Caco-2 (cell line): ENCODE measurements at regions of chr11 and their contacts with region 1.

Region 1: DNA sequence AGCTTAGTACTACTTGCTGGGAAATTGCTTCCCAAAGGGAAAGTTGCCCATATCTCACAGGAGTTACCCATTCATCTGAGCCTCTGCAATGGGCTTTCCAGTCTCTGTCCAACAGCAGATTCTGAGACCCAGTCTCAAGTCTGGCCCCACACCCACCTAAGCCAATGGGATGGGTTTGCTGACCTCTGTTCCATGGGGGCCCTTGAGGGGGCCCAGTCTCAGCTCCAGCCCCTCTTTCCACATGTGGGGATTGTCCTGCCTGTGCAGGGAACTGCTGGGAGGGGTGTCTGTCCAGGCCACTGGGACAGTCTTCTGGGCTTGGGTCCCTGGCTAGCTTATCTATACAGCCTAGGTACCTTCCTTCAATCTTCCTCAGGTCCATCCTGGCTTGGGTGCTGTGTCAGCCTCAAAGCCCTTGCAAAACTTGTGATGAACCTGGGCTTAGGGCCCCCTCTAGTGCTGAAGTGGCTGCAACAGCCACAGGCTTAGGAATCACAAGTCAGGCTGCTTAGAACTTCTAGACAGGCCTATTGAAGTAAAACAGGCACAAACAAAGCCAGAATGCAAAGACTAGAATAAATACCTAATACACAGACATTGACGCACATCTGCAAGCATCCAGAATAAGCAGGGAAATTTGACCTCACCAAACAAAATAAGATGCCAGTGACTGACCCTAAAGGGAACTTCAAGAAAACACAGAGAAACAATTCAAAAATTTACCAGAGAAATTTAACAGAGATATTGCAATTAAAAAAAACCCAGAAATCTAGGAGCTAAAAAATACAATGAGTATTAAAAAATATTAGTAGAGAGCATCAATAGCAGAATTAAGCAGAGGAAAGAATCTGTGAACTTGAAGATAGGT is 11.7 kb upstream of the PATL1 start:
- DNase-seq: peak; percentile 88 to 90
- H3K4me3 ChIP-seq: no peak overlapping the region
- H3K4me3 Mint-ChIP-seq: peak overlapping the region; percentile 51
- H3K27ac Mint-ChIP-seq: peak overlapping the region; percentile 7
- H3K4me1 ChIP-seq: peaks cover 34% of the 10 kb centered on the region
- H3K4me1 Mint-ChIP-seq: peaks cover 29% of the 10 kb centered on the region
- H3K27me3 ChIP-seq: no peaks in the 10 kb centered on the region
- H3K27me3 Mint-ChIP-seq: no peaks in the 10 kb centered on the region
- CTCF ChIP-seq: peak; percentile 86 to 88

Region 2: DNA sequence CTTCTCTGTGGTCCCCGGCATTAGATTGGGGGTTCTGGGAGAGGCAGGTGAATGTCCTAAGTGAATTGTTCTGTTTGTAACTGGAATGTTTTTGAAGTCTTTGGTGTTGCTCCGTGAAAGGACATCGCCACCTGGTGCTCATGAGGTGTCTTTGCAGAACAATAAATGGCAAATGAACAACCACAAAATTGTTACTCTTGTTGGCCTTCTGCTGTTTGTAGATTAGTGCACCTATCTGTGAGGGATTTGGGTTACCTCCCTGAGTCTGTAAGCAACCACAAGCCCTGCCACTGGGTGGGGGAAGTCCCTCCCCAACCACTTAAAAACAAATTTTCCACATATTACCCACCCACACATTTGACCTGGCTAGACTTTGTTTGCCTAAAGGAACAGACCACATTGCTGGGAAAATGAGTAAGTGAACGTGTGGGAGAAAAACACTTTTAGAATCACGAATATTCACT is 472.5 kb before region 1 on chr11:
- CTCF ChIA-PET with region 1: no interaction called
- POLR2A ChIA-PET with region 1: no interaction called
- intact Hi-C with region 1: loop called (anchors 5 kb)
- DNase-seq: peak in 1 of 2 experiments; percentile 40
- H3K4me3 ChIP-seq: no peak overlapping the region
- H3K4me3 Mint-ChIP-seq: no peak overlapping the region
- H3K27ac Mint-ChIP-seq: no peak overlapping the region
- H3K4me1 ChIP-seq: no peaks in the 10 kb centered on the region
- H3K4me1 Mint-ChIP-seq: peaks cover 6% of the 10 kb centered on the region
- H3K27me3 ChIP-seq: no peaks in the 10 kb centered on the region
- H3K27me3 Mint-ChIP-seq: no peaks in the 10 kb centered on the region
- CTCF ChIP-seq: peak; percentile 59 to 80

Region 3: GRCh38 chr11:59542142-59542810 is 138.2 kb before region 1 on chr11:
- CTCF ChIA-PET with region 1: interaction called, 3 read pairs
- POLR2A ChIA-PET with region 1: no interaction called
- intact Hi-C with region 1: loop called (anchors 1 kb)
- DNase-seq: no peak
- H3K4me3 ChIP-seq: no peak overlapping the region
- H3K4me3 Mint-ChIP-seq: no peak overlapping the region
- H3K27ac Mint-ChIP-seq: no peak overlapping the region
- H3K4me1 ChIP-seq: peaks cover 9% of the 10 kb centered on the region
- H3K4me1 Mint-ChIP-seq: peaks cover 6% of the 10 kb centered on the region
- H3K27me3 ChIP-seq: no peaks in the 10 kb centered on the region
- H3K27me3 Mint-ChIP-seq: no peaks in the 10 kb centered on the region
- CTCF ChIP-seq: no peak

Region 4: GRCh38 chr11:59615637-59616395 is 64.7 kb before region 1 on chr11 and contains the start of gene OSBP:
- CTCF ChIA-PET with region 1: no interaction called
- POLR2A ChIA-PET with region 1: no interaction called
- intact Hi-C with region 1: loop called (anchors 1 kb)
- DNase-seq: peak; percentile 99 to 100
- H3K4me3 ChIP-seq: peak within 1 kb of the TSS; percentile 92
- H3K4me3 Mint-ChIP-seq: peak within 1 kb of the TSS; percentile 98
- H3K27ac Mint-ChIP-seq: peak within 1 kb of the TSS; percentile 98
- H3K4me1 ChIP-seq: peaks cover 29% of the 10 kb centered on the region
- H3K4me1 Mint-ChIP-seq: peaks cover 29% of the 10 kb centered on the region
- H3K27me3 ChIP-seq: no peaks in the 10 kb centered on the region
- H3K27me3 Mint-ChIP-seq: no peaks in the 10 kb centered on the region
- CTCF ChIP-seq: no peak
- total RNA-seq, gene OSBP: 64.5 and 67.5 TPM in 2 replicates

Region 5: DNA sequence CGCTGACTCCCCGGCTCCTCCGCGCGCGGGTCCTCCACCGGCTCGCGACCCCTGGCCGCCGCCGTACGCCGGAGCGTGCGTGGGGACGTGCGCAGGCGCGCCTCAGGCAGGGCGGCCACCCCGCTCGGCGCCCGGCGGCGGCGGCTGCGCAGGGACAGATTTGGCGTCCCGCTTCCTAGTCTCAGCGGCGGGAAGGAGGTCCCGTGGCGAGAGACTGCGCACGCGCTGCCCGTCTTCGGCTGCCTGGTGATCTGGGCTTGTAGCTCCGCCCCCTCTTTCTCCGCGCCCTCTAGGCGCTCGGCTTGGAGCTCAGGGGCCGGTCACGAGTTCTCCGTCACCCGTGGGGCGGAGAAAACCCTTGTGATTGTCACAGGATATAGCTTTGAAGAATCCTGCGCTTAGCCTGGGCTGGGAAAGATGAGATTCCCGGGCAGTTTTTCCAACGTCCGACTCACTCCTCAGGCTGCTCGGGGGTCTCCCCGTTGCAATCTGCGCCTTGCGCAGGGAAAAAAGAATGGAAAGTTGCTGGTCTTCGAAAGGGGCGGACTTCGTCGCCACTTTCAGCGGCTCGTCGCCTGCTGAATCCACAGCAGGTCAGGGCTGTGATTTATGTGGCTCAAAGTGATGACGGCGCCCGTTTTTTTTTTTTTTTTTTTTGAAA is 11.4 kb before region 1 on chr11 and contains the start of gene PATL1:
- CTCF ChIA-PET with region 1: interaction called, 28 read pairs
- POLR2A ChIA-PET with region 1: interaction called, 12 read pairs
- intact Hi-C with region 1: loop called (anchors 1 kb)
- DNase-seq: peak; percentile 99
- H3K4me3 ChIP-seq: peak within 1 kb of the TSS; percentile 96
- H3K4me3 Mint-ChIP-seq: peak within 1 kb of the TSS; percentile 96
- H3K27ac Mint-ChIP-seq: peak within 1 kb of the TSS; percentile 100
- H3K4me1 ChIP-seq: peaks cover 5% of the 10 kb centered on the region
- H3K4me1 Mint-ChIP-seq: peaks cover 14% of the 10 kb centered on the region
- H3K27me3 ChIP-seq: no peaks in the 10 kb centered on the region
- H3K27me3 Mint-ChIP-seq: no peaks in the 10 kb centered on the region
- CTCF ChIP-seq: no peak
- total RNA-seq, gene PATL1: 57.8 and 61.4 TPM in 2 replicates

Region 6: DNA sequence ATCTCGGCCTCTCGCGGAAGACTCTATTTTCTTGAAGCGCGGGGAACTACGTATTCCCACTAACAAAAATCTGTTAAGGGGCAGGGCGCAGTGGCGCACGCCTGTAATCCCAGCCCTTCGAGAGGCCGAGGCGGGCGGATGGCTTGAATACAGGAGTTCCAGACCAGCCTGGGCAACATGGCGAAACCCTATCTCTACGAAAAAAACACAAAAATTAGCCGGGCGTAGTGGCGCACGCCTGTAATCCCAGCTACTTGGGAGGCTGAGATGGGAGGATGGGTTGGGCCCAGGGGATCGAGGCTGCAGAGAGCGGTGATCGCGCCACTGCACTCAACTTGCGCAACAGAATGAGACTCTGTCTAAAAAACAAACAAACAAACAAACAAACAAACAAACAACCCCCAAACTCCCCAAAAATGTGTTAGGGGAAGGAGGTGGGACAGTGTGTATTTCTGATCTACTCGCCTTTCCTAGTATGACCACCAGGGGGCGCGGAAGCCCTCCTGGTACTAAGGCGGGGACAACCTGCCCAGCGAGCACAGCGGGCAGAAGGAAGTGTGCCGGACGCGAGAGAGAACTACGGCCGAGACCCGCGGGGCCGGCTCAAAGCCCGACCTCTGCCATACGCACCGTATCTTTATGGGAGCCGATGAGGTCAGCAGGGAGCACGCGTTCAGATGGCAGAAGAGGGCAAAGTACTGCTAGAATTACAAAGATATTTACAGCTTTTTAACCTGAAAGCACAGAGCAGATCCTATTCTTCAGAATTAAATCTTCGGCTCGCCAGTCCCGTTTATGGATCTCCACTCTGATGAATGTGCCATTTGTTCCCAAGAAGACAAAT is 73.4 kb after region 1 on chr11:
- CTCF ChIA-PET with region 1: no interaction called
- POLR2A ChIA-PET with region 1: no interaction called
- intact Hi-C with region 1: loop called (anchors 1 kb)
- DNase-seq: peak; percentile 86 to 90
- H3K4me3 ChIP-seq: peak overlapping the region; percentile 96
- H3K4me3 Mint-ChIP-seq: peak overlapping the region; percentile 83
- H3K27ac Mint-ChIP-seq: peak overlapping the region; percentile 53
- H3K4me1 ChIP-seq: peaks cover 29% of the 10 kb centered on the region
- H3K4me1 Mint-ChIP-seq: peaks cover 19% of the 10 kb centered on the region
- H3K27me3 ChIP-seq: no peaks in the 10 kb centered on the region
- H3K27me3 Mint-ChIP-seq: no peaks in the 10 kb centered on the region
- CTCF ChIP-seq: peak; percentile 93 to 94

Region 7: DNA sequence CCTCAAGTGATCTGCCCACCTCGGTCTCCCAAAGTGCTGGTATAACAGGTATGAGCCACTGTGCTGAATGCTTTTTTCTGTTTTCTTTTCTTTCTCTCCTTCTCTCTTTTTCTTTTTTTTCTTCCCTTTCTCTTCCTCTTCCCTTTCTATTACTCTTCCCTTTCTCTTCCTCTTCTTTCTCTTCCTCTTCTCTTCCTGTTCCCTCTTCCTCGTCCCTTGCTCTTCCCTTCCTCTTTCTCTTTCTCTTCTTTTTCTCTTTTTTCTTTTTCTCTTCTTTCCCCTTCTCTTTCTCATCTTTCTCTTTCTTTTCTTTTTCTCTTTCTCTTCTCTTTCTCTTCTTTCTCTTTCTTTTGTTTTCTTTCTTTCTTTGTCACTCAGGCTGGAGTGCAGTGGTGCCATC is 259.0 kb after region 1 on chr11:
- CTCF ChIA-PET with region 1: no interaction called
- POLR2A ChIA-PET with region 1: no interaction called
- intact Hi-C with region 1: no loop called
- DNase-seq: no peak
- H3K4me3 ChIP-seq: no peak overlapping the region
- H3K4me3 Mint-ChIP-seq: no peak overlapping the region
- H3K27ac Mint-ChIP-seq: no peak overlapping the region
- H3K4me1 ChIP-seq: no peaks in the 10 kb centered on the region
- H3K4me1 Mint-ChIP-seq: no peaks in the 10 kb centered on the region
- H3K27me3 ChIP-seq: no peaks in the 10 kb centered on the region
- H3K27me3 Mint-ChIP-seq: peaks cover 12% of the 10 kb centered on the region
- CTCF ChIP-seq: no peak